ENCODE measurements at regions of chr4 and their contacts with region 1.

Region 1: DNA sequence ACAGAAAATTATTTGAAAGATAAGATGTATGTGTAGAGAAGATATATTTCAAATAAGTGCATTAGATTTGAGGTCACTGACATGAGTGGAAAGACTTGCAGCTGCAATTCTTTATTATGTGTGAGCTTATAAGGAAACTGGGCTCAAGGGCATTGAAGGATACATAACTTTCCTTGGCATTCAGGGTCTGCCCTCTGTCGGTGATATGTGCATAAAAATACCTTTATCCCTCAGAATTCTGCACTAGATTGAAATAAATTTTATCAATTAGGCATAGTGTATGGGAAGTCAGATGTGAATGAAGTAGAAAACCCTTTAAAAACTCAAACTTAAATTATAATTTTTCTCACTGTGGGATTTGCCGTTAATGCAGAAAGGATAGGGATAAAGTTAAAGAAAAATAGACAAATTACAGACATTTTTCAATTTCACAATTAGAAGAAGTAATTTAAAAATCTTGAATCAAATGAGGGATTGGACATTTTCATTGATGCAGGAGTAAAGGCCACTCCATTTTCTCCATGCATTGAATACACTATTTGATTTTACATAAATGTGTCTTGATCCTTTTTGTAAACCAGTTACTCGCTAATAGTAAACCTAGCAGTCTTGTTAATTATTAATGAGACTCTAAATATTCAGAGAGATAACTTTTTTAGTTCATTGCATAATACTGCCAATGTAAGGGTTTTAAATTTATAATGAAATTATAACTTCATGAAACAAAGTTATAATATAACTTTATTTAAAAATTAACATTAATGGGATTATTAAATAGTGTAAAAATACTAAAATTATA is 21.0 kb upstream of the ETNPPL start:
- DNase-seq: peak; percentile 12
- ATAC-seq: peak; percentile 54; the same call in 1 of the 2 replicates
- H3K4me3 ChIP-seq: no peak overlapping the region
- H3K27ac ChIP-seq: no peak overlapping the region
- H3K4me1 ChIP-seq: no peaks in the 10 kb centered on the region
- H3K27me3 ChIP-seq: no peaks in the 10 kb centered on the region
- CTCF ChIP-seq: peak; percentile 30 to 45 (median 35); a peak in 3 of 6 replicates
- POLR2A ChIP-seq: no peak
- RAD21 ChIP-seq: peak; percentile 55

Region 2: DNA sequence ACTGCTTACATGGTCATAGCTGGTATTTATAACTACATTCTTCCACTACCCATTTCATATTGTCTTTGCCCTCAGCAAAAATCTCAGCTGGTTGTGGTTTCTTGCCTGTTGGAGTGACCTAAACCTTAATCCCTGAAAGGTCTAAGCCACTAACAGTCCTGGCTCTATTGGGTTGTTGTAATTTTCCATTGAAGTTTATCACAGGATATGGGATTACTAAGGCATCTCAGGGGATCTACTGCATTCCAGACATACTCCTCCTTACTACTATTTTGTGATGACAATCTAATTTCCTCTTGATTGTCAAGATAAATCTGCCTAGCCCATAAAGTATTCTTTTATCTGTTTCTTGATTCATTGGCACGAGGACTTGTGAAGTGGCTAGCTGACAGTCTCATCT is 139.6 kb before region 1 on chr4:
- CTCF ChIA-PET with region 1: no interaction called
- POLR2A ChIA-PET with region 1: no interaction called
- RAD21 ChIA-PET with region 1: no interaction called
- intact Hi-C with region 1: no loop called
- DNase-seq: no peak
- ATAC-seq: no peak
- H3K4me3 ChIP-seq: no peak overlapping the region
- H3K27ac ChIP-seq: no peak overlapping the region
- H3K4me1 ChIP-seq: no peaks in the 10 kb centered on the region
- H3K27me3 ChIP-seq: no peaks in the 10 kb centered on the region
- CTCF ChIP-seq: no peak
- POLR2A ChIP-seq: no peak
- RAD21 ChIP-seq: no peak

Region 3: DNA sequence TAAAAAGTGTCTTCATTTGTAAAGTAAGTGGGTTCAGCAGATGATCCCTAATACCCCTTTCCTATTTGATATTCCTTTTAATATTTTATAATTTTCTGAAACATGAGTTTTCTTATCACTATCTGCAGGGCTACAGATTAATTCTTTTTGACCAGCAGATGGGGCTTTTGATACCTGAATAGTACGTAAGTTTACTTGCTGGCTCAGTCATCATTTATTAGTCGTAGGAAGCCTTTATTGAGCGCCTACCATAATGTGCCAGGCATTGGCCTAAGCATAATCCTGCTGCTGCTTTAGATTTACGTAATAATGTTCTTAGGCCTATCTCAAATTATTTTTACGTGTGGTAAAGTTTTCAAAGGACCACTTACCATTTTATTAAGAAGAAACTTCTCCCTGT is 100.4 kb before region 1 on chr4:
- CTCF ChIA-PET with region 1: no interaction called
- POLR2A ChIA-PET with region 1: no interaction called
- RAD21 ChIA-PET with region 1: interaction called in 1 of 2 experiments, 3 read pairs
- intact Hi-C with region 1: loop called (anchors 2 kb)
- DNase-seq: peak; percentile 15
- ATAC-seq: peak; percentile 71; the same call in 1 of the 2 replicates
- H3K4me3 ChIP-seq: no peak overlapping the region
- H3K27ac ChIP-seq: no peak overlapping the region
- H3K4me1 ChIP-seq: no peaks in the 10 kb centered on the region; a peak in 1 of 4 replicates
- H3K27me3 ChIP-seq: no peaks in the 10 kb centered on the region
- CTCF ChIP-seq: peak; percentile 38 to 57 (median 48); a peak in 5 of 6 replicates
- POLR2A ChIP-seq: no peak
- RAD21 ChIP-seq: peak; percentile 53

Region 4: GRCh38 chr4:108714863-108715581 is 68.8 kb before region 1 on chr4:
- CTCF ChIA-PET with region 1: no interaction called
- POLR2A ChIA-PET with region 1: no interaction called
- RAD21 ChIA-PET with region 1: no interaction called
- intact Hi-C with region 1: no loop called
- DNase-seq: no peak
- ATAC-seq: no peak
- H3K4me3 ChIP-seq: no peak overlapping the region
- H3K27ac ChIP-seq: no peak overlapping the region
- H3K4me1 ChIP-seq: no peaks in the 10 kb centered on the region
- H3K27me3 ChIP-seq: no peaks in the 10 kb centered on the region
- CTCF ChIP-seq: no peak
- POLR2A ChIP-seq: no peak
- RAD21 ChIP-seq: no peak